ENCODE measurements at regions of chr13 and their contacts with region 1.

Region 1: DNA sequence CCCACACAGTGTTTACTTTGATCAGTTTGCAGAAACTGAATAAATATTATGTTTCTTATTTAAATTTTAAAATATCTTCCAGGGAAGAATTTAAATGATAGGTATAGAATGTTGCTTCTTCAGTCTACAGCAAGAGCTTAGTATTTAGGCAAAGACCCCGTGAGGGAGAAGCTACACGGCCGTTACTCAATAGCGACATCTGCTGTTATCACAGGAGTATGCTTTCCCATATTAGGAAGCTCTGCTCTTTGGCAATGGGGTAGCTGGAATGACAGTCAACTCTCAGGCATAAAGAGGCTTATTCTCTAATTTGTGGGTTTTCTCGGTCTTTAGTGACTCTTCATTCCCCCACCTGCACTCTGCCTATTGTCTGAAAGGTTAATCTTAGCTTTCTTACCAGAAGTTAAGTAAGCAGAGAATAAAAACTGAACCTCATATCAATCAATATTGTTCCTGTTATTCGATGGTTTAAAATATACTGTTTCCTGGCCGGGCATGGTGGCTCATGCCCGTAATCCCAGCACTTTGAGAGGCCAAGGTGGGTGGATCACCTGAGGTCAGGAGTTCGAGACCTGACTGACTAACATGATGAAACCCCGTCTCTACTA is 13.2 kb upstream of the LHFPL6 start:
- DNase-seq: no peak
- H3K4me3 ChIP-seq: no peak overlapping the region
- H3K27ac ChIP-seq: no peak overlapping the region
- H3K4me1 ChIP-seq: no peaks in the 10 kb centered on the region
- H3K27me3 ChIP-seq: no peaks in the 10 kb centered on the region
- CTCF ChIP-seq: peak in 2 of 3 experiments; percentile 88 to 93; a peak in 3 of 4 replicates
- EP300 ChIP-seq: no peak
- POLR2A ChIP-seq: no peak
- RAD21 ChIP-seq: peak; percentile 93 to 96

Region 2: GRCh38 chr13:39144941-39145533 is 471.2 kb before region 1 on chr13:
- CTCF ChIA-PET with region 1: interaction called, 12 read pairs
- POLR2A ChIA-PET with region 1: no interaction called
- DNase-seq: peak; percentile 31 to 55
- H3K4me3 ChIP-seq: no peak overlapping the region
- H3K27ac ChIP-seq: no peak overlapping the region
- H3K4me1 ChIP-seq: peaks cover 0 to 4% (median 0%) of the 10 kb centered on the region in 4 experiments; a peak in 2 of 7 replicates
- H3K27me3 ChIP-seq: no peaks in the 10 kb centered on the region; a peak in 1 of 7 replicates
- CTCF ChIP-seq: peak; percentile 50 to 85 (median 70)
- EP300 ChIP-seq: no peak
- POLR2A ChIP-seq: no peak
- RAD21 ChIP-seq: peak; percentile 87 to 92

Region 3: DNA sequence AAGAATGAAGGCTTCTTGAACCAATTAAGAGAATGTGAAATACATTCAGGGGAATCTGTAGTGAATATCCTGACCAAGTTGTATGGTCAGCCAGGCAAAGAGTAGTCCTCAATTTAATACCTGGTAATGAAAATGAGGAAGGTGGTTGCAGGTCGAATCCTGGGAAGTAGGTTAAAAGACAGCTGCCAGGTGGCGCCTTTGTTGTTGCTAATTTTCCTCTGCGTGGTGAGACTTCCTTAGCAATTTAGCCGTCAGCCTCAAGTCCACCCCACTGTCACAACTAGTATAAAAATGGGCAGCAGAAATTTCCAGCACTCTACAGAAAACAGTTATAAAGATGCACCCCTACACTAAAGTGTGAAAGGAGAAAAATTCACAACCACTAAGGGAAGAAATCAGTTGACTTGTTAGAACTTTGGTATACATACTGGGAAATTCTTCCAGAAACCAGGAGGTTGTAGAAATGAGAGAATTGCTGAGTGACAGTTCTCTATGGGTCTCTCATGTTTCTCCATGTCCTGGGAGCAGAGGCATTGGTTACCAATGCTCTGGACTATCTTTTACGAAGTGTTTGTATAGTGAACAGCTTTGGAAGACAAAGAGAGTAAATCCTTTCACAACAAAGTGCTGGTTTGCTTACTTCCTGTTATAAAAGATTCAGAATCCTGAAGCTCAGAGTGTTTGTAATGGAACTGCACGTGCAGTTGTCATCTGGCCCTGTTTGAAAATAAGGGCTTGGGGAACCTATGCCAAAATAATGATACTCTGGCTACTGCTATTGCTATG is 342.0 kb before region 1 on chr13:
- CTCF ChIA-PET with region 1: interaction called, 23 read pairs
- POLR2A ChIA-PET with region 1: no interaction called
- DNase-seq: no peak
- H3K4me3 ChIP-seq: no peak overlapping the region
- H3K27ac ChIP-seq: no peak overlapping the region
- H3K4me1 ChIP-seq: no peaks in the 10 kb centered on the region
- H3K27me3 ChIP-seq: no peaks in the 10 kb centered on the region
- CTCF ChIP-seq: peak; percentile 20 to 66 (median 48)
- EP300 ChIP-seq: no peak
- POLR2A ChIP-seq: no peak
- RAD21 ChIP-seq: peak; percentile 80 to 83

Region 4: GRCh38 chr13:39379118-39379517 is 237.1 kb before region 1 on chr13:
- CTCF ChIA-PET with region 1: interaction called, 11 read pairs
- POLR2A ChIA-PET with region 1: no interaction called
- DNase-seq: no peak
- H3K4me3 ChIP-seq: no peak overlapping the region
- H3K27ac ChIP-seq: no peak overlapping the region
- H3K4me1 ChIP-seq: no peaks in the 10 kb centered on the region
- H3K27me3 ChIP-seq: peaks cover 26 to 42% (median 33%) of the 10 kb centered on the region in 4 experiments
- CTCF ChIP-seq: no peak
- EP300 ChIP-seq: no peak
- POLR2A ChIP-seq: no peak
- RAD21 ChIP-seq: no peak

Region 5: DNA sequence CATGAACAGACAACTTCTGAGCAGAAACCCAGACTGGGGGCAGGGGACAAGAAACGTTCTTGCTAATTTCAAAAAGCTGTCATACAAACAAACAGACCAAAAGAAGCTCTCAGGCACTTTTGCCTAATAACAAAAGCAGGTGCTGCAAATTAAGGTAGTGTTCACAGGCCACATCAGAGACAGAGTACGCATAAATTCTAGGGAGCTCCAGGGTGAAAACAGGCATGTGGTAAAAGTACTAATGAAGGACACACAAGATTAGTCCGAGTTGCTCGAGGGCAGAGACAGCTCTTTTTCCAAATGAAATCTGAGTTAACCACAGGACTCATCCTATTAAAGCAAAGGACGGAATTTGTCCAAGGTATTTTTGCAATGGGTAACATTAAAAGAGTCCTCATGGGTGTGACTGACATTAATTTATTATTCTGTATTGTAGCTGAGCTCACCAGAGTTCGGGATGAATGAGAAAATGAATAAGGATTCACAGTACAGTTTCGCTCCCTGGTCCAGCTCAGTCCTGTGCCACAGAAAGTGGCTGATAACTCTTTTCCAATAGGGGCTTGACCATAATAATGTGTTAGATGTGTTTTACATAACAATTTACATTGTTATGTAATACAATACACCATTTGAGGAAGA is 210.5 kb before region 1 on chr13:
- CTCF ChIA-PET with region 1: interaction called, 76 read pairs
- POLR2A ChIA-PET with region 1: interaction called, 3 read pairs
- DNase-seq: no peak
- H3K4me3 ChIP-seq: no peak overlapping the region
- H3K27ac ChIP-seq: no peak overlapping the region
- H3K4me1 ChIP-seq: peaks cover 2 to 14% (median 9%) of the 10 kb centered on the region in 4 experiments; a peak in 3 of 7 replicates
- H3K27me3 ChIP-seq: no peaks in the 10 kb centered on the region
- CTCF ChIP-seq: no peak
- EP300 ChIP-seq: no peak
- POLR2A ChIP-seq: no peak
- RAD21 ChIP-seq: no peak

Region 6: GRCh38 chr13:39602614-39603366 is 13.4 kb before region 1 on chr13 and contains the start of gene LHFPL6:
- CTCF ChIA-PET with region 1: interaction called, 23 read pairs
- POLR2A ChIA-PET with region 1: no interaction called
- DNase-seq: peak; percentile 46 to 85
- H3K4me3 ChIP-seq: peak within 1 kb of the TSS; percentile 42 to 88 (median 78)
- H3K27ac ChIP-seq: no peak within 1 kb of the TSS
- H3K4me1 ChIP-seq: peaks cover 0 to 6% (median 2%) of the 10 kb centered on the region in 4 experiments; a peak in 2 of 7 replicates
- H3K27me3 ChIP-seq: peaks cover 0 to 8% (median 4%) of the 10 kb centered on the region in 4 experiments; a peak in 2 of 7 replicates
- CTCF ChIP-seq: peak; percentile 50 to 60 (median 58)
- EP300 ChIP-seq: no peak
- POLR2A ChIP-seq: no peak
- RAD21 ChIP-seq: peak; percentile 79 to 82
- total RNA-seq, gene LHFPL6: 15.5 and 17.0 TPM in 2 replicates